Body of pancreas (tissue), 4 donors: ENCODE measurements at regions of chr12 and their contacts with region 1.

Region 1: DNA sequence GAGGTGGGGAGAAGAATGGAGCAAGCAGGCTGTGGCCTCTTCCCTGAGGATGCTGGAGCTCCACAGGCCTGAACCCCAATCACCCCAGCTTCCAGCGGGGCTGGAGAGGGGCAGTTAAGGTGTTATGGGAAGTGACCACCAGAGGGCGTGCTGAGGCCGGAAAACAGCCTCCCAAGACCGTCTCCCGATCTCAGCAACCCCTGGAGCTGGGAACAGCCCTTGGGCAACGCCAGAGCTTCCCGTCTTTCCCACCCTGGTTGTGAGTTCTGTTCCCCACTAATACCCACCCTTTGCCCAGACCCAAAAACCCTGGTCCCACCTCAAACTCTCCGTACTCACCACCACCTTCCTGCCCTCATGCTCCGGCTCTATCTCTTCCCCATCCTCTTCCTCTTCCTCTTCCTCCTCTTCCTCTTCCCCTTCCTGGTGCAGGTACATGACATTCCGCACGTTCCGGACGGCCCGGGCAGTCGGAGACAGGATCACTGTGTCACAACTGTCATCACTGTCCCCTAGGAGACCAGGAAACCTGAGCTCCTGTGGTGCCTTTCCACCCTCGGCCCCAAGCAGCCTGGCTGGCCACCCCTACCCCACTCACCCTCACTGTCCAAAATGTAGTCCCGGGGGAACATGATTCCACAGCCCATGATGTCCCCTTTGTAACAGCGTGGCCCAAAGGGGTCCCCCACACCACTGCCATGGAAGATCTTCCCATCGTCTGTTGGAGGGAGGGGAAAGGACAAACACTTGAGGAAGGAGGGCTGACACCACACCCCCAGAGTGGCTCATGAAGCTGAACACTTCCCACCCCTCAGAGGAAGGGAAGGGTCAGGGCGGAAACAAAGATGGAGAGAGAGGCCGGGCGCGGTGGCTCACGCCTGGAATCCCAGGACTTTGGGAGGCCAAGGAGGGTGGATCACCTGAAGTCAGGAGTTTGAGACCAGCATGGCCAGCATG is 12.9 kb downstream of the SPRYD3 start:
- DNase-seq: peak; percentile 80 to 84 (median 83)
- ATAC-seq: peak; percentile 63
- H3K4me3 ChIP-seq: no peak overlapping the region
- H3K27ac ChIP-seq: peak overlapping the region in 3 of 4 donors; percentile 20 to 55 (median 45)
- H3K4me1 ChIP-seq: peaks cover 15% of the 10 kb centered on the region
- H3K27me3 ChIP-seq: no peaks in the 10 kb centered on the region
- CTCF ChIP-seq: peak; percentile 75 to 92 (median 86)
- POLR2A ChIP-seq: peak in 1 of 3 donors; percentile 19

Region 2: GRCh38 chr12:52976147-52977071 is 89.8 kb before region 1 on chr12:
- intact Hi-C with region 1: no loop called
- DNase-seq: peak in 1 of 4 donors; percentile 13
- ATAC-seq: no peak
- H3K4me3 ChIP-seq: no peak overlapping the region
- H3K27ac ChIP-seq: no peak overlapping the region
- H3K4me1 ChIP-seq: peaks cover 44% of the 10 kb centered on the region
- H3K27me3 ChIP-seq: no peaks in the 10 kb centered on the region
- CTCF ChIP-seq: peak in 1 of 7 experiments; percentile 13
- POLR2A ChIP-seq: no peak

Region 3: GRCh38 chr12:53102883-53103807 is 36.9 kb after region 1 on chr12 and contains the start of gene SOAT2:
- intact Hi-C with region 1: loop called (anchors 5 kb)
- DNase-seq: no peak
- ATAC-seq: no peak
- H3K4me3 ChIP-seq: no peak within 1 kb of the TSS
- H3K27ac ChIP-seq: peak within 1 kb of the TSS; percentile 60 to 82 (median 78)
- H3K4me1 ChIP-seq: peaks cover 33% of the 10 kb centered on the region
- H3K27me3 ChIP-seq: no peaks in the 10 kb centered on the region
- CTCF ChIP-seq: no peak
- POLR2A ChIP-seq: no peak
- total RNA-seq, gene SOAT2: not detected

Region 4: DNA sequence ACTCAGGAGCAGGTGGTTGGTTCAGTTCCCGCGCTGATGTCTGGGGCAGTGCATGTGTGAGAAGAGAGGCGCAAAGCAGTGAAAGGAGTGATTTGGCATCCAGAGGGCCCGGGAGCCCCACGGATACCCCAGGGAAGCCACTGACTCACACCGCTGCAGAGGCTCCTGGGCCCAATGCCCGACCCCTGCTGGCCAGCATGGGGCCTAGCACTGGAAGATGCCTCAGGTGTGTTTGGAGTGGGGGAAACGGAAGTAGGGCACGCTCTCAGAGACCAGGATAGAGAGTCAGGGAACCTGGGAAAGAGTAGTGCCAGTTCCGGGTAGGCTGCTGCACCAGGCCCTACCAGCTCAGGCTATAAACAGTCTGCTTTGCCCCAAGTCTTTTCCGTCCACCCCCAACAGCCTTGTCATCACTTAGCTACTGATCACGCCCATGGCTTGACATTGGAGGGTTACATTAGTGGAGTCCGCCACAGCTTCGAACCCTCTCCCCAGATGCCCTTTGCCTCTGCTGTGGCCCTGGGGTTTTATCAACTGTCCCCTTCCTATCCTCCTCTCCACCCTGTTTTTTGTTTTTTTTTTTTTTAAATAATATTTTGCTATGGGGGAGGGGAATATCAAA is 124.0 kb after region 1 on chr12:
- intact Hi-C with region 1: loop called (anchors 10 kb)
- DNase-seq: peak; percentile 58 to 70 (median 66)
- ATAC-seq: peak; percentile 87
- H3K4me3 ChIP-seq: no peak overlapping the region
- H3K27ac ChIP-seq: peak overlapping the region in 1 of 4 donors; percentile 11
- H3K4me1 ChIP-seq: peaks cover 9% of the 10 kb centered on the region
- H3K27me3 ChIP-seq: no peaks in the 10 kb centered on the region
- CTCF ChIP-seq: peak; percentile 53 to 73 (median 67)
- POLR2A ChIP-seq: peak in 1 of 3 donors; percentile 7